Activated naive CD4-positive, alpha-beta T cell treated with anti-CD3 and anti-CD28 coated beads for 36 hours (primary cell): ENCODE measurements at regions of chr13 and their contacts with region 1.

Region 1: DNA sequence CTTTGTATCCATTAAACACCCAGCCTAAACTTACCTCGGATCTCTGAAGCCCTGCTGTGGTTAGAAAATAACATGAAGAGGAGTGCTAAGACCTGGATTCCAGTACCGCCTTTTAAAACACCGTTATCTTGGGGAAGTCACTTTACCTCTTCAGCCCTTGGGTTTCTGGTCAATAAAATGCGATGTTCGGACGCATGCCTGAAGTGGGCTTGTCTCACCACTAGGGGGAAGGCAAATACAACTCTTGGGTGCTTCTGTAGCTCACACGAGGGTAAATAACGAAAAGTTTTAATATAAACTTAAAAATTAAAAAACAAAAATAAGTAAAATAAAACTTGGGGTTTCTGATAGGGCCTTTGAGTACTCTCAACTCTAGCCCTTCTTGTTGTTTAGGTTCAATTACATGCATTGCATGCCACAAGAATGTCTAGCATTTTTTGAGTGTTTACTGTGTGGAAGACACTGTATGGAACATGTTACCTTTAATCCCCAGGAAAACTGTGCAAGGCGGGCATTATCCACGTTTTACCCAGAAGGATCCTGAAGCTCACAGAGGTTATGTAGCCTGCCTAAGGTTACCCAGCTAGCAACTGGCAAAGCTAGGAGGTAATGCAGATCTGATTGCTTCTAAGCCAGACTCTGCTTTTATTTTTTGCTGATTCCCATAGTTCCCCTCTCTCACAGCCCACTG is 240.4 kb downstream of the LMO7 start:
- DNase-seq: peak; percentile 76
- H3K4me3 Mint-ChIP-seq: no peak overlapping the region
- H3K27ac Mint-ChIP-seq: no peak overlapping the region
- H3K4me1 Mint-ChIP-seq: peaks cover 10% of the 10 kb centered on the region
- H3K27me3 Mint-ChIP-seq: no peaks in the 10 kb centered on the region

Region 2: GRCh38 chr13:75687150-75687763 is 189.2 kb before region 1 on chr13:
- CTCF ChIA-PET with region 1: interaction called, 28 read pairs
- intact Hi-C with region 1: no loop called
- DNase-seq: no peak
- H3K4me3 Mint-ChIP-seq: no peak overlapping the region
- H3K27ac Mint-ChIP-seq: no peak overlapping the region
- H3K4me1 Mint-ChIP-seq: peaks cover 12% of the 10 kb centered on the region
- H3K27me3 Mint-ChIP-seq: no peaks in the 10 kb centered on the region

Region 3: GRCh38 chr13:75760131-75761021 is 116.1 kb before region 1 on chr13:
- CTCF ChIA-PET with region 1: interaction called, 25 read pairs
- intact Hi-C with region 1: loop called (anchors 1 kb)
- DNase-seq: peak; percentile 31
- H3K4me3 Mint-ChIP-seq: peak overlapping the region; percentile 67
- H3K27ac Mint-ChIP-seq: peak overlapping the region; percentile 11
- H3K4me1 Mint-ChIP-seq: peaks cover 72% of the 10 kb centered on the region
- H3K27me3 Mint-ChIP-seq: peaks cover 4% of the 10 kb centered on the region

Region 4: GRCh38 chr13:75889427-75889826 is 12.9 kb after region 1 on chr13:
- CTCF ChIA-PET with region 1: interaction called, 25 read pairs
- intact Hi-C with region 1: no loop called
- DNase-seq: no peak
- H3K4me3 Mint-ChIP-seq: no peak overlapping the region
- H3K27ac Mint-ChIP-seq: no peak overlapping the region
- H3K4me1 Mint-ChIP-seq: no peaks in the 10 kb centered on the region
- H3K27me3 Mint-ChIP-seq: peaks cover 3% of the 10 kb centered on the region

Region 5: DNA sequence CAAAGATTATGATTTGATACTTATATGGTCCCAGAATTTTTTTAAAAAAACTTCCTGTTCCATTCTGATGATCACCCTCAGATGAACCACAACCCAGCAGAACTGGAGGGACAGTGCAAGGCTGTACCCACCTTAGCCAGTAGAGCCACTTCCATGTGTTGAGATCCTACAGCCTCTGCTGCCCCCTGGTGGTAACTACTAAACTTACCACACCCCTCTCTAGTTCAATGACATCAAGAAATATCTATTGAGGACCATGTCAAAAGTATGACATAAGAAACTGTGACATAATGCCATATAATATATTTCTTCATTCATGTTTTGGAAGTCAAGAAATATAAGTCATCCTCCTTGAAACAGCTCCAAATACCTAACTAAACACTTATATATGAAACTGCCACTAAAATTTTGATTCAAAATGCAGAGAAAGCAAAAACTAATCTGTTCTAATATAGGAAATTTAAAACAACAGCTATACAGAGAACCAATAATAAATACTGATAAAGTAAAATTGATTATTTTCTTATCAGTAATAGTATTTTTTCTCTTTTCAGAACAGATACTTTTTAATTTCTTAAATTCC is 597.1 kb after region 1 on chr13:
- CTCF ChIA-PET with region 1: interaction called, 50 read pairs
- intact Hi-C with region 1: loop called (anchors 1 kb)
- DNase-seq: peak; percentile 85
- H3K4me3 Mint-ChIP-seq: no peak overlapping the region
- H3K27ac Mint-ChIP-seq: no peak overlapping the region
- H3K4me1 Mint-ChIP-seq: no peaks in the 10 kb centered on the region
- H3K27me3 Mint-ChIP-seq: peaks cover 5% of the 10 kb centered on the region

Region 6: GRCh38 chr13:76822698-76823267 is 946.3 kb after region 1 on chr13:
- CTCF ChIA-PET with region 1: no interaction called
- intact Hi-C with region 1: loop called (anchors 10 kb)
- DNase-seq: peak; percentile 19
- H3K4me3 Mint-ChIP-seq: no peak overlapping the region
- H3K27ac Mint-ChIP-seq: no peak overlapping the region
- H3K4me1 Mint-ChIP-seq: peaks cover 2% of the 10 kb centered on the region
- H3K27me3 Mint-ChIP-seq: no peaks in the 10 kb centered on the region

Region 7: DNA sequence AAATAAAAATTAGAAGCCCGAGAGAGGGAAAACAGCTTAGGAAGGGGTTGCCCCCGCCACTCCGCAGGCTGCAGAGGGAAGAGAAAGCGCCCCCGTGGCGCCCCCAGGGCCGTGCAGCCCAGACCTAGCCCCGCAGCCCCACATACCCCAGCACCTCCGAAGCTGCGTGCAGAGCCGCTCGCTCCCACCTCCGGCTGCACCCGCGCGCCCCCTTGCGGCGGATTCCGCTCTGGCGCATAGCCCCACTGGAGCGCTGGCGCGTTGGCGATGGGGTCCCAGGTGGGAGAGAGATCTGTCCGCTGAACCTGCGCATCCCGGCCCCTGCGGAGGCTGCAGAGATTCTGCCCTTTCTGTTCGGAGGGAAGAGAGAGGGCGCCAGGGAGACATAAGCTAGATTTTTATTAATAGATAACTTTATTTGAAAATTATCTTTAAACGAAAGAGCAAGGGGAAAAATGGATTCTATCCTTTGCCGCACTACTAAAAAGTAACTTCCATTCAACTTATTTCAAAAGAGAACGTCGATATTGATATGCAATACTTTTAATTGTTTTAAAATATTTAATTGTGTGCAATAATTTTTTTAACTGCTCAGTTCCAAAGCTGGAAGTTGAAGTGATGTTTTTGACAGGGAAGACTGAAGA is 1103.7 kb after region 1 on chr13:
- CTCF ChIA-PET with region 1: no interaction called
- intact Hi-C with region 1: loop called (anchors 5 kb)
- DNase-seq: peak; percentile 85
- H3K4me3 Mint-ChIP-seq: no peak overlapping the region
- H3K27ac Mint-ChIP-seq: no peak overlapping the region
- H3K4me1 Mint-ChIP-seq: peaks cover 8% of the 10 kb centered on the region
- H3K27me3 Mint-ChIP-seq: peaks cover 13% of the 10 kb centered on the region